OCI-LY7 (cell line): ENCODE measurements at regions of chr1 and their contacts with region 1.

Region 1: GRCh38 chr1:92277105-92277723 is 21.6 kb downstream of the GLMN start:
- DNase-seq: no peak
- H3K4me3 ChIP-seq: no peak overlapping the region
- H3K27ac ChIP-seq: no peak overlapping the region
- H3K4me1 ChIP-seq: no peaks in the 10 kb centered on the region
- CTCF ChIP-seq: no peak

Region 2: GRCh38 chr1:91754348-91754747 is 522.9 kb before region 1 on chr1:
- CTCF ChIA-PET with region 1: no interaction called
- POLR2A ChIA-PET with region 1: interaction called, 11 read pairs
- intact Hi-C with region 1: no loop called
- DNase-seq: no peak
- H3K4me3 ChIP-seq: no peak overlapping the region
- H3K27ac ChIP-seq: no peak overlapping the region
- H3K4me1 ChIP-seq: no peaks in the 10 kb centered on the region
- CTCF ChIP-seq: no peak

Region 3: GRCh38 chr1:92037400-92037799 is 239.8 kb before region 1 on chr1:
- CTCF ChIA-PET with region 1: no interaction called
- POLR2A ChIA-PET with region 1: no interaction called
- intact Hi-C with region 1: no loop called
- DNase-seq: no peak
- H3K4me3 ChIP-seq: no peak overlapping the region
- H3K27ac ChIP-seq: no peak overlapping the region
- H3K4me1 ChIP-seq: no peaks in the 10 kb centered on the region
- CTCF ChIP-seq: no peak

Region 4: DNA sequence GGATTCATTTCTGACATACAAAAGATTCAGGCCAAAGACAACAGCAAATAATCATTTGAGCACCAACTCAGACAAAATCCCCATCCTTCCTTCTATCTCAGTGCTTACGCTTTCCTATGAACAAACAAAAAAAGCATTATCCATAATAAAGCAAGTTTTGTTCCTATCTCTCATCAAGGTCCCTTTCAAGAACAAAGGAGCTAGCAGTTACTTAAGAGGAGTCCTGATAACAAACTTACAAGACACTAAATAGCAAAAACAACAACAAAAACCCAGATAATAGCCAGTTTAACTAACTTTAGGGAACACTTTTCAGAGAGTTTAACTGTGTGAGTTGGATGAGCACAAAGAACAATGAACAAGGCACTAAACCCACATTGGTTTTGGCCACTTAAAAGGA is 497.2 kb after region 1 on chr1:
- CTCF ChIA-PET with region 1: no interaction called
- POLR2A ChIA-PET with region 1: no interaction called
- intact Hi-C with region 1: no loop called
- DNase-seq: no peak
- H3K4me3 ChIP-seq: no peak overlapping the region
- H3K27ac ChIP-seq: no peak overlapping the region
- H3K4me1 ChIP-seq: no peaks in the 10 kb centered on the region
- CTCF ChIP-seq: no peak